Caco-2 (cell line): ENCODE measurements at regions of chr6 and their contacts with region 1.

Region 1: GRCh38 chr6:41920921-41921711 is at the starts of genes BYSL and MED20:
- DNase-seq: peak; percentile 92
- H3K4me3 ChIP-seq: peak within 1 kb of the TSS; percentile 98
- H3K4me3 Mint-ChIP-seq: peak within 1 kb of the TSS; percentile 88
- H3K27ac Mint-ChIP-seq: peak within 1 kb of the TSS; percentile 98
- H3K4me1 ChIP-seq: peaks cover 9% of the 10 kb centered on the region; the same call in 1 of the 2 replicates
- H3K4me1 Mint-ChIP-seq: peaks cover 19% of the 10 kb centered on the region
- H3K27me3 ChIP-seq: no peaks in the 10 kb centered on the region
- H3K27me3 Mint-ChIP-seq: no peaks in the 10 kb centered on the region
- CTCF ChIP-seq: peak; percentile 94 to 95
- total RNA-seq, gene BYSL: 42.6 and 45.9 TPM in 2 replicates
- total RNA-seq, gene MED20: 40.0 and 43.7 TPM in 2 replicates

Region 2: DNA sequence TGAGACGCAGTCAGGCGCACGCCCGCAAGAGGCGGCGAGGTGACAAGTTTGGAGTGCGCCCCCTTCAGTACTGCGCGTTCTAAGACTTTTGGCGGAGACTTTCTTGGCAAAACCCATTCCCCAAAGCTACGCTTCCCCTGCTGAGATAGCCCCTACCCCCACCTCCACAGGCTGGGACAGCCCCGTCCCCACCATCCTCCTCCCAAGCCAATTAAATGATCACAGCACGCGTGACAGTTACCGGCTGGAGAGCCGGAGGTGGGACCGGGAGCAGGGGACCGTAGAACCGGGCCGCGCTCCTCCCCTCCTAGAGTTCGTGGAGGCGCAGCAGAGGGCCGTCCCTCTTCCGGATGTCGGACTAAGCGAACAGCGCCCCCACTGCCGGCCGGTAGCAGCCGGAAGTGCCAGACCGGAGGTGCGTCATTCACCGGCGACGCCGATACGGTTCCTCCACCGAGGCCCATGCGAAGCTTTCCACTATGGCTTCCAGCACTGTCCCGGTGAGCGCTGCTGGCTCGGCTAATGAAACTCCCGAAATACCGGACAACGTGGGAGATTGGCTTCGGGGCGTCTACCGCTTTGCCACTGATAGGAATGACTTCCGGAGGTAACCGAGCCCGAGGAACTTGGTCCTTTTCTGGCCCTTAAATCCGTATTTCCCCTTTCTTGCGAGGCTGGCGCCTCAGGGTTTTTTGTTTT is 133.7 kb before region 1 on chr6 and contains the start of gene TOMM6:
- CTCF ChIA-PET with region 1: interaction called, 19 read pairs
- POLR2A ChIA-PET with region 1: interaction called, 10 read pairs
- intact Hi-C with region 1: loop called (anchors 2 kb)
- DNase-seq: peak; percentile 93 to 96
- H3K4me3 ChIP-seq: peak within 1 kb of the TSS; percentile 86
- H3K4me3 Mint-ChIP-seq: peak within 1 kb of the TSS; percentile 89
- H3K27ac Mint-ChIP-seq: peak within 1 kb of the TSS; percentile 98
- H3K4me1 ChIP-seq: peaks cover 7% of the 10 kb centered on the region; the same call in 1 of the 2 replicates
- H3K4me1 Mint-ChIP-seq: peaks cover 9% of the 10 kb centered on the region
- H3K27me3 ChIP-seq: no peaks in the 10 kb centered on the region
- H3K27me3 Mint-ChIP-seq: no peaks in the 10 kb centered on the region
- CTCF ChIP-seq: peak; percentile 82 to 89
- total RNA-seq, gene TOMM6: 224 and 260 TPM in 2 replicates

Region 3: GRCh38 chr6:41895300-41896233 is 25.5 kb before region 1 on chr6 and contains the start of gene USP49:
- CTCF ChIA-PET with region 1: interaction called, 23 read pairs
- POLR2A ChIA-PET with region 1: interaction called, 17 read pairs
- intact Hi-C with region 1: loop called (anchors 1 kb)
- DNase-seq: peak; percentile 89 to 96
- H3K4me3 ChIP-seq: peak within 1 kb of the TSS; percentile 52
- H3K4me3 Mint-ChIP-seq: no peak within 1 kb of the TSS
- H3K27ac Mint-ChIP-seq: no peak within 1 kb of the TSS
- H3K4me1 ChIP-seq: peaks cover 22% of the 10 kb centered on the region
- H3K4me1 Mint-ChIP-seq: peaks cover 7% of the 10 kb centered on the region
- H3K27me3 ChIP-seq: no peaks in the 10 kb centered on the region
- H3K27me3 Mint-ChIP-seq: no peaks in the 10 kb centered on the region
- CTCF ChIP-seq: no peak
- total RNA-seq, gene USP49: 17.9 and 18.5 TPM in 2 replicates

Region 4: DNA sequence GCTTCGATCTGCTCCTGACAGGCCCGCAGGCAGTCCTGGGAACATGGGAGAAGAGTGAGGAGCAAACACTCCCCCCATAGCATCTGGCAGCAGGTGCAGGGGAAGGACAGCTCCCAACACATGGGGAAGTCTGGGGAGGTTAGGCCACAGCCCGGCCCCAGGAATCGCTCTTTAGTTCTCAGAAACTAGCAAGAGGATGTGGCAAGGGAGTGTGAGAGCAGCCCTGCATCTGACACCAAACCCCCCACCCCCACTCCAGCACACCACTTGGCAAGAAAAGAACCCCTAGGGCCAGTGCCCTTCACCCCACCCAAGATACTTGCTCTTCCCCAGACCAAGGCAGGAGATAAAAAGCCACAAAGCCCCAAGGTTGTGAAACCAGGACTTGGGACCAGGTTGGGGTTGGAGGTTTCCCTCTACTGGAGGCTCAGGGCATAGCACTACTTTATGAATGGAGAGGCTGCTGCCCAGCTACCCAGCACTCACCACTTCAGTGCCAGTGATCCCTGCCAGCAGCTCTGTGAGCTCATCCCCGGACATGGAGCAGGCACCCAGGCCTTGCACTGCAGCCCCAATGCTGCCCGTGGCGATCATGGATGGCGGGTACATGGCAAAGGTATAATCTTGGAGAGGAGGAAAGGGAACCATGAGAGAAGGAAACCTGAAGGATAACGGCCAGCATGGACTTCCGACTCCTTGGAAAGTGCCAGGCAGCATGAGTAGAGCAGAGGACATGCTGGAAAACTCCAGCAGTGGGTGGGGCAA is 15.1 kb after region 1 on chr6:
- CTCF ChIA-PET with region 1: interaction called, 12 read pairs
- POLR2A ChIA-PET with region 1: interaction called, 9 read pairs
- intact Hi-C with region 1: loop called (anchors 2 kb)
- DNase-seq: peak; percentile 68 to 80
- H3K4me3 ChIP-seq: no peak overlapping the region
- H3K4me3 Mint-ChIP-seq: no peak overlapping the region
- H3K27ac Mint-ChIP-seq: peak overlapping the region; percentile 20
- H3K4me1 ChIP-seq: peaks cover 33% of the 10 kb centered on the region
- H3K4me1 Mint-ChIP-seq: peaks cover 17% of the 10 kb centered on the region
- H3K27me3 ChIP-seq: no peaks in the 10 kb centered on the region
- H3K27me3 Mint-ChIP-seq: no peaks in the 10 kb centered on the region
- CTCF ChIP-seq: peak; percentile 83 to 91

Region 5: DNA sequence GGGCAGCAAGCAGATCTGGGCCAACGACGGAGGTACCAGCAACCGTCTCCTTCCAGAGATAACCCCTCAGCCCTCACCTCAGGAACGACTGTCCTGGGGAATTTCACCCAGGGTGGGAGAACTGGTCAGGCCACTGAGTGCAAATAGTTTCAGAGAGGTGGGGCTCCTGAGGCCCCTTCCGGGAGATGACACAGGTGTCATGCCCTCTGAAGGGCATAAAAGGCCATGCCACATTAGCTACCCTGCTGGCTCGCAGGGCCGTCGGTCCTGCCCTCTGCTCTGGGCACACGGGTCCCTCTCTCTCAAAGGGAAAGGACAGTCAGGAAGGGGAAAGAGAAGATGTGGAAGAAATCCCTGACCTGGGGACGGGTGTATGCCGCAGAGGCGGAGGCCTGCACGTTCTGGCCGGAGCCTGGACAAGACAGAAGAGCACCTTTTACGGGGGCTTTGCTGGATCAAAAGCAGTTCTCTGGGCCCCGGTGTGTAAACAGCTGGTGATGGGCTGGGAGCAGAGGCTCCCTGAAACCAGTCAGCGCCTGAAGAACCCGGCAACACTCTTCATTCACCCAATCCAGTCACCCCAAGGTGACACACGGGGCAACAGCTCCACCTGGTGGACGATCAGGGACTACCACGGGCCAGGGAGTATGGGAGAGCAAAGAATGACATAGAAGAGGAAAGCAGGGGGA is 122.8 kb after region 1 on chr6:
- CTCF ChIA-PET with region 1: interaction called, 6 read pairs
- POLR2A ChIA-PET with region 1: interaction called, 3 read pairs
- intact Hi-C with region 1: loop called (anchors 1 kb)
- DNase-seq: peak; percentile 88 to 93
- H3K4me3 ChIP-seq: 0 out of 2 replicates have a peak overlapping the region, but pooled peaks have one; percentile 9
- H3K4me3 Mint-ChIP-seq: peak overlapping the region; percentile 76
- H3K27ac Mint-ChIP-seq: peak overlapping the region; percentile 95
- H3K4me1 ChIP-seq: peaks cover 17% of the 10 kb centered on the region
- H3K4me1 Mint-ChIP-seq: peaks cover 9% of the 10 kb centered on the region
- H3K27me3 ChIP-seq: no peaks in the 10 kb centered on the region
- H3K27me3 Mint-ChIP-seq: no peaks in the 10 kb centered on the region
- CTCF ChIP-seq: peak; percentile 90 to 92